ENCODE measurements at regions of chr17 and their contacts with region 1.

Region 1: DNA sequence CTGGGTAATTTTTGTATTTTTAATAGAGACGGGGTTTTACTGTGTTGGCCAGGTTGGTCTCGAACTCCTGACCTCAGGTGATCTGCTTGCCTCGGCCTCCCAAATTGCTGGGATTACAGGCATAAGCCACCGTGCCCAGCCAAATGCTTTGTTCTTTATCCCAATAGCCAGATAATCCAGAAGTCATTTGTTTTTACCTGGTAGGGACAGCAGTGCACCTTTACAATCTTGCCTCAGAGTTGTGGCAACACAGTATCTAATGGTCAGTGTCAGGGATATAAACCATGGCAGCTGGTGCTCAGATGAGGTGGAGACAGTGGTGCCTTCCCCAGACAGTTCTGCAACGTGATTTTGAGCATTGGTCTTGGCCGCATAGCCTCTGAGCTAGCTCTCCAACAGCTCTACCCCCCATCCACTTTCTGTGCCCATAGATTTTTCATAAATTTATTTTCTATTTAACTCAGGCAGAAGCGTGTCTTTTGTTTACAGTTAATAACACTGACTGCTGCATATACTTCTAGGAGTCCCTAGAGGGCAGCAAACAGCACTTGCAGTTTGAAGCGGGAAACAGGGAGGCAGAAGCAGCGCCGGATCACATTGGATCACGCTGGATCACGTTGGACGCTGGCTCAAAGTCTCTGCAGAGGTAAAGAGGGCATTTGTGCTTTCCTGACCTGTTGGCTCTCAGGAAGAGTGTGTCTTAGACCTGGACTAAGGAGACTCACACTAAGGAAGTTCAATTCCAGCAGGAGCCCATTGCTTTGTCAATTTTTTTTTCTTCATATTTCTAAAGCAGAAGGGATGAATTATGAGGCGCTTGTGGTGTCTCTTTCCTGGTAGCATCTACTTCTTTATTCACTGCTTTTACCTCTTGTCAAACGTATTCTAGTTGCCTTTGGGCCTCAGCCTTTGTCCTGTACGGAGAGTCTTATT is 5.1 kb upstream of the GGT6 start:
- DNase-seq: peak; percentile 72 to 93 (median 73)
- H3K4me3 ChIP-seq: no peak overlapping the region
- H3K27ac ChIP-seq: no peak overlapping the region
- H3K4me1 ChIP-seq: peaks cover 0 to 16% (median 5%) of the 10 kb centered on the region in 3 donors
- H3K27me3 ChIP-seq: no peaks in the 10 kb centered on the region
- CTCF ChIP-seq: peak; percentile 86

Region 2: GRCh38 chr17:4625181-4625617 is 59.7 kb after region 1 on chr17:
- intact Hi-C with region 1: loop called (anchors 10 kb)
- DNase-seq: peak in 3 of 5 donors; percentile 76 to 92 (median 87)
- H3K4me3 ChIP-seq: no peak overlapping the region
- H3K27ac ChIP-seq: no peak overlapping the region
- H3K4me1 ChIP-seq: no peaks in the 10 kb centered on the region
- H3K27me3 ChIP-seq: no peaks in the 10 kb centered on the region
- CTCF ChIP-seq: no peak

Region 3: DNA sequence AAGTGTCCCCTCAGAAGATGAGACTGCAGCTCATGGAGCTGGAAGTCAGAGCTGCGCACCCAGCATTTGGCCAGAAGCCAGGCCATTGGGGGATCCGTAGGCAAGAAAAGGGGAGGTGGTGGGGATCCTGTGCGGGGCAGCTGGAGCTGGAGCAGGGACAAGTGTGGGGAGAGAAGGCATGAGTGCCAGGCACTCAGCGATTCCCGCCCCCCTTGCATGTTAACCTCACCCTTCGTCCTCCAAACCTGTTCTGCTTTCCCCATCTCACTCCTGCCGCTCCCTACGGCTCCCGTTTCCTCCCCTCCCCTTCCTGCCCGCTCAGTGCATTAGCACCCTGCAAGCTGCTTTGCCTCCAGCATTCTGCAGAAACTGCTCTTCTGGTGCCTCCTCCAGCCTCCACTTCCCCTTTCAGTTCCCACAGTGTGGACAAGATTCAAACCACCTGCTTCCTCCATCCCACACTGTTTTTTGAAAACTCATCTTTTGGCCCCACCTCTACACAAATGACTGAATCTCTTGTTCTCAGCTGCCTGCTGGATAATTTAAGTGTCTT is 70.4 kb after region 1 on chr17:
- intact Hi-C with region 1: no loop called
- DNase-seq: no peak
- H3K4me3 ChIP-seq: no peak overlapping the region
- H3K27ac ChIP-seq: no peak overlapping the region
- H3K4me1 ChIP-seq: peaks cover 0 to 2% (median 0%) of the 10 kb centered on the region in 3 donors
- H3K27me3 ChIP-seq: peaks cover 8% of the 10 kb centered on the region
- CTCF ChIP-seq: no peak